Activated B cell treated with CpG ODN at 0.5 μM for 24 hours (primary cell): ENCODE measurements at regions of chr19 and their contacts with region 1.

Region 1: GRCh38 chr19:2887391-2887914 is 13.3 kb upstream of the ZNF57 start:
- DNase-seq: peak; percentile 20
- ATAC-seq: peak; percentile 65
- H3K4me3 Mint-ChIP-seq: peak overlapping the region; percentile 24
- H3K27ac Mint-ChIP-seq: peak overlapping the region; percentile 81
- H3K4me1 Mint-ChIP-seq: peaks cover 20% of the 10 kb centered on the region
- H3K27me3 Mint-ChIP-seq: no peaks in the 10 kb centered on the region
- CTCF ChIP-seq: no peak

Region 2: DNA sequence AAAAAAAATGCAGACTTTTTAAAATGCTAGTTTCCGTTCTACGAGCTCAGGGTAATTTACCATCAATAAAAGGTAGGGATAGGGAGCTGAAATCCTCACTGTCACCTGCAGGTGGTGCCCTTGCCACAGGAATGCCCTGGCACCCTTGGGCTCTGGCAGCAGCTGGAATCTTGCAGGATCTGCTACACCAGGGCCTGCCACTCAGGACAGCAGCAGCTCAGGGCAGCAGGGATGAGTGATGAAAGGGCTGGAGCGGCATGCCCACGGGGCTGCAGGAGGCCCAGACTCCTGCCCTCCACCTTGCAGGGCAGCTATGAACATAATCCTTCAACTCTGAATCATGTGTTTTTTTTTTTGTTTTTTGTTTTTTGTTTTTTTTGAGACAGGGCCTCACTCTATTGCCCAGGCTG is 238.9 kb before region 1 on chr19:
- CTCF ChIA-PET with region 1: interaction called, 15 read pairs
- POLR2A ChIA-PET with region 1: interaction called, 4 read pairs
- intact Hi-C with region 1: loop called (anchors 1 kb)
- DNase-seq: peak; percentile 75
- ATAC-seq: peak; percentile 87
- H3K4me3 Mint-ChIP-seq: no peak overlapping the region
- H3K27ac Mint-ChIP-seq: peak overlapping the region; percentile 35
- H3K4me1 Mint-ChIP-seq: peaks cover 43% of the 10 kb centered on the region
- H3K27me3 Mint-ChIP-seq: no peaks in the 10 kb centered on the region
- CTCF ChIP-seq: no peak

Region 3: DNA sequence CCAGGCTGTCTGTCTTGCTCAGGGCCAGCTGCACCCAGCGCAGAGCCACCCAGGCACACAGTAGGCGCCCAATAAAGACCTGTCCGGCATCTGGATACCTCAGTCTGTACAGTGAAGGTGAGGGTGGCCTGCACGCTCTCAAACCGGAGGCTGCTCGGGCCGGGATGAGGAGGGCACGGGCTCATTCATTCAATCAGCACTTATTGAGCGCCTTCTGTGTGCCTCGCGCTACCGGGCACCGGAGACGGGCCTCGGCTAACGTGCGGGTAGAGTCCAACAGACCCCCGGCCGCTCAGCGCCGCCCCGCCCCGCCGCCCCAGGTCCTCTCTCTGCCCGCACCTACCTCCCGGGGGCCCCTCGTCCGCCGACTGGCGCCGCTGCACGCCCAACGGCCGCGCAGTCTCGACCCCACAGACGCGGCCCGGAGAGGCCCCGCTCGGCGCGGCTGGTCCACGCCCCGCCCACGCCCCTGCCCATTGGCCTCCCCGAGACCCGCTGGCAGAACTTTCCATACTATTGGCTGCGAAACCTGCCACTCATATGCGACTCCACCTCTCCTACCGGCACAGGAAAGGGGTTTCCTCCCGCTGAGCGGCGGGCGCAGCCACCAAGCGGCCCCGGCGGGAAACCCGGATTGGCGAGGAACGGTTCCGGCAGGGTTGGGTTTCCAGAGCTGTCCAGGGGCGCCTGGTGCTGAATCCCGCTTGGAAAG is 147.7 kb before region 1 on chr19 and contains the start of gene SLC39A3:
- CTCF ChIA-PET with region 1: no interaction called
- POLR2A ChIA-PET with region 1: no interaction called
- intact Hi-C with region 1: no loop called
- DNase-seq: peak; percentile 94
- ATAC-seq: peak; percentile 100
- H3K4me3 Mint-ChIP-seq: peak within 1 kb of the TSS; percentile 88
- H3K27ac Mint-ChIP-seq: peak within 1 kb of the TSS; percentile 65
- H3K4me1 Mint-ChIP-seq: peaks cover 28% of the 10 kb centered on the region
- H3K27me3 Mint-ChIP-seq: peaks cover 3% of the 10 kb centered on the region
- CTCF ChIP-seq: no peak
- total RNA-seq, gene SLC39A3: 33.8 and 34.3 TPM in 2 replicates

Region 4: DNA sequence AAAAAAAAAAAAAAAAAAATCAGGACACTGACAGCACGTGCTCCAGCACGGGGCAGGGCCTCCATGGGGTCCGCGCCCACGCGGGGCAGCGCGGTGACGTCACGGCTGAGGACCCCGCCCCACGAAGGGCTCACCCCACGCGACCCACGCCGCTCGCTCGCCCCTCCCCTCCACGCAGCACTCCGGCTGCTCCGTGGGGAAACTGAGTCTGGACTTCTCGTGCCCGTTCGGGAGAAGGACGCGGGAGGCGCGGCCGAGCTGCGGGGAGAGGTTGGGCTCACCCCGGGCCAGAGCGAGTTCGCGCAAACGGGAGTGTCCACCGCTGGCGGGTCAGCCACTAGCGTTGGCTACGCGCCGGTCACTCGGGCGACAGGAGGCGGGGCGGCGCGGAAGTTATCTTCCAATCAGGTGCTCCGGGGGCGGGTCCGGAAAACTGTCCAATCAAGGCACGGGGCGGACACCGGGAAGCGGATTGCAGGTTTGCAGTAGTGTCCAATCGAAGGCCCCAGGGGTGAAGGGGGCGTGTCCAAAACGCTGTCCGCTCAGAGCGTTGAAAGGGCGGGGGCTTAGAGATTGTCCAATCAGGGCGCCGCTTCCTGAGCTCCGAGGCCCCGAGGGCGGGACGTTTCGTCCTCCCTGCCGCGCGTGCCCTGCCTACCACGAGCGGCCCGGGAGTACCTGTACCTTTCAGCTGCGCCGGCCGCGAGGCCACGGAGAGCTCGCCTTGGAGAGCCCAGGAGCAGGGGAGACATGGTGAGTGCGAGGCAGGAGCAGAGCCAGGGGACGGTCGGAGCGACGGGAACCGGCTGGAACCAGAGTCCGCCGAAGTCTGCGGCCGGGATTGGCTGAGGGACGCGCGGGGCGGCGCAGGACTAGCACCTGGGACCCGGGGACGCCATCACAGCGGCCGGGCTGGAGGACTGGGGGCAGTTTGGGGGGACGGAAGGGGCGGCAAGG is 13.1 kb after region 1 on chr19 and contains the start of gene ZNF57:
- CTCF ChIA-PET with region 1: interaction called, 4 read pairs
- POLR2A ChIA-PET with region 1: interaction called, 17 read pairs
- intact Hi-C with region 1: loop called (anchors 1 kb)
- DNase-seq: peak; percentile 89
- ATAC-seq: peak; percentile 99
- H3K4me3 Mint-ChIP-seq: peak within 1 kb of the TSS; percentile 99
- H3K27ac Mint-ChIP-seq: peak within 1 kb of the TSS; percentile 87
- H3K4me1 Mint-ChIP-seq: peaks cover 10% of the 10 kb centered on the region
- H3K27me3 Mint-ChIP-seq: no peaks in the 10 kb centered on the region
- CTCF ChIP-seq: no peak
- total RNA-seq, gene ZNF57: 4.6 and 5.3 TPM in 2 replicates

Region 5: GRCh38 chr19:2944775-2945574 is 57.5 kb after region 1 on chr19 and contains the start of gene ZNF77:
- CTCF ChIA-PET with region 1: no interaction called
- POLR2A ChIA-PET with region 1: interaction called, 15 read pairs
- intact Hi-C with region 1: loop called (anchors 2 kb)
- DNase-seq: peak; percentile 96
- ATAC-seq: peak; percentile 98
- H3K4me3 Mint-ChIP-seq: peak within 1 kb of the TSS; percentile 96
- H3K27ac Mint-ChIP-seq: peak within 1 kb of the TSS; percentile 95
- H3K4me1 Mint-ChIP-seq: peaks cover 31% of the 10 kb centered on the region
- H3K27me3 Mint-ChIP-seq: no peaks in the 10 kb centered on the region
- CTCF ChIP-seq: no peak
- total RNA-seq, gene ZNF77: 5.2 and 6.7 TPM in 2 replicates

Region 6: DNA sequence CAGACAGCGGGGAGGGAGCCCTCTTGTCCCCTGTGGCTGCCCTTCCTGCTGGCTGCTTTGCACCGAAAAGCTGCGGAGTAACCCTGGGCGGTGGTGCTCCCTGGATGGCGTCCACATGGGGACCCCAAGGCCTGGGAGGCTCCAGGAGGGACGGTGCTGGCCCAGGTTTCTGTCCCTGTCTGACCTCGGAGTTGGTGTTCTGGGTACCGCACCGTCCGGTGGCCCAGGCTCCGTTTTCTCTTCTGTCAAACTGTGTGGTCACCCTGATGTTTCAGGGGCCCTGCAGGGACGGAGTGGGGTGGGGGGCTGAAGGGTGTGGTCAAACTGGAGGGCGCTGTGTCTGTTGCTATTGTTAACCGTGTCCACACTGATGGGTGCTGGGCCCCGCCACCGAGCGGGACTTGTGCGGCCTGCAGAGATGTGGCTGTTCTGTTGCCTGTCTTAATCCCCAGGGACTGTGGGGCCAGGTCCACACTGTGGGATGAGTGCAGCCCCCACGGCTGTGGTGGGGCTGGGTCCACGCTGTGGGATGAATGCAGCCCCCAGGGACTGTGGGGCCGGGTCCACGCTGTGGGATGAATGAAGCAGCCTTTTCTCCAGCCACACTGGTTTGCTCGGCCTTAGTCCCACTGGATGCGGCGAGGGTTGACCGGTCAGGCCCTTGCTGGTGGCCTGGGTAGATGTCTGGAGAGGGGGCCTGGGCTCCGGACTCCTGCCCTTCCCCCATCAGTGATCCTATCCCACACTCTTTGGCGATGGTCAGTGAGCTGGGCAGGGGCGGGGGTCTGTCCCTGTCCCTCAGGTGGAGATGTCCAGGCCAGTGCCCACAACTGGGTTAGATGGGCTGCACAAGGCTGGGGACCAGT is 213.6 kb after region 1 on chr19:
- CTCF ChIA-PET with region 1: interaction called, 12 read pairs
- POLR2A ChIA-PET with region 1: no interaction called
- intact Hi-C with region 1: loop called (anchors 2 kb)
- DNase-seq: no peak
- ATAC-seq: no peak
- H3K4me3 Mint-ChIP-seq: no peak overlapping the region
- H3K27ac Mint-ChIP-seq: no peak overlapping the region
- H3K4me1 Mint-ChIP-seq: peaks cover 29% of the 10 kb centered on the region
- H3K27me3 Mint-ChIP-seq: no peaks in the 10 kb centered on the region
- CTCF ChIP-seq: no peak

Region 7: GRCh38 chr19:3108775-3109174 is 221.3 kb after region 1 on chr19:
- CTCF ChIA-PET with region 1: interaction called, 12 read pairs
- POLR2A ChIA-PET with region 1: no interaction called
- intact Hi-C with region 1: loop called (anchors 2 kb)
- DNase-seq: peak; percentile 61
- ATAC-seq: peak; percentile 76
- H3K4me3 Mint-ChIP-seq: no peak overlapping the region
- H3K27ac Mint-ChIP-seq: no peak overlapping the region
- H3K4me1 Mint-ChIP-seq: peaks cover 11% of the 10 kb centered on the region
- H3K27me3 Mint-ChIP-seq: no peaks in the 10 kb centered on the region
- CTCF ChIP-seq: no peak